Activated B cell treated with CpG ODN at 0.5 μM for 24 hours (primary cell): ENCODE measurements at regions of chr9 and their contacts with region 1.

Region 1: GRCh38 chr9:80242002-80242401 is 670.2 kb downstream of the TLE4 start:
- DNase-seq: no peak
- ATAC-seq: no peak
- H3K4me3 Mint-ChIP-seq: no peak overlapping the region
- H3K27ac Mint-ChIP-seq: no peak overlapping the region
- H3K4me1 Mint-ChIP-seq: peaks cover 32% of the 10 kb centered on the region
- H3K27me3 Mint-ChIP-seq: no peaks in the 10 kb centered on the region
- CTCF ChIP-seq: no peak

Region 2: DNA sequence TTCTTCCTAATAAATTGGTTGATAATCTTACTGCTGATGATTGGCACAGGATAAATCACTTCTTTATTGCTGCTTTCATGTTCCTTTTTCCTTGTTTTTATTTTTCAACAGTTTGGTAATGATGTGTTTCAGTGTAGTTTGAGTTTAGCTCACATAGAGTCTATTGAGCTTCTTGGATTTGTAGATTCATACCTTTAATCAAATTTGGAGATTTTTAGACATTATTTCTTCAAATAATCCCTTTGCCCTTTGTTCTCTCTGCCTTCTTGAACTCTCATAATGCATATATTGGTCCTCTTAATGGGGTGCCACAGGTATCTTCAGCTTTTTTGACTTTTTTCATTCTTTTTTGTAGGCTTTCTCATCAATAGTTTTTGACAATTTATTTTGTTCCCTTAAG is 394.9 kb before region 1 on chr9:
- CTCF ChIA-PET with region 1: no interaction called
- POLR2A ChIA-PET with region 1: no interaction called
- intact Hi-C with region 1: no loop called
- DNase-seq: no peak
- ATAC-seq: no peak
- H3K4me3 Mint-ChIP-seq: no peak overlapping the region
- H3K27ac Mint-ChIP-seq: no peak overlapping the region
- H3K4me1 Mint-ChIP-seq: no peaks in the 10 kb centered on the region
- H3K27me3 Mint-ChIP-seq: no peaks in the 10 kb centered on the region
- CTCF ChIP-seq: no peak

Region 3: GRCh38 chr9:79990536-79990935 is 251.5 kb before region 1 on chr9:
- CTCF ChIA-PET with region 1: no interaction called
- POLR2A ChIA-PET with region 1: no interaction called
- intact Hi-C with region 1: no loop called
- DNase-seq: no peak
- ATAC-seq: no peak
- H3K4me3 Mint-ChIP-seq: no peak overlapping the region
- H3K27ac Mint-ChIP-seq: no peak overlapping the region
- H3K4me1 Mint-ChIP-seq: no peaks in the 10 kb centered on the region
- H3K27me3 Mint-ChIP-seq: no peaks in the 10 kb centered on the region
- CTCF ChIP-seq: no peak

Region 4: DNA sequence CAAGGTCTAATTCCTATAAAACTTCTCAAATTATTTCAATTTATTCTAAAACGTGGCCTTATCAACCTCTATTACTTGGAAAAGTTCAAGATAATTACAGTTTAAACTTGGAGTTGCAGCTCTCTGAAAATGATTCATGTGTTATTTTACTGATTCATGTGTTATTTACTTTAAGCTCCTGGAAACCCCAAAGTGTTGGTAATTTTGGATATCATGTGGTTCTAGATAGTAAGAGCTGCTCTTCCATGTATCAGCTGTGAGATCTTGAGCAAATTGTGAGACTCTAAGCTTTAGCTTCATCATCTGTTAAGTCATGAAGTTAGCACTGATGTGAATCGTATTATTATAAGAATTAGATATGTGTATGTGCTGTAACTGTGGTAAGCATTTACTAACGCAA is 78.9 kb after region 1 on chr9:
- CTCF ChIA-PET with region 1: no interaction called
- POLR2A ChIA-PET with region 1: no interaction called
- intact Hi-C with region 1: loop called (anchors 5 kb)
- DNase-seq: no peak
- ATAC-seq: no peak
- H3K4me3 Mint-ChIP-seq: no peak overlapping the region
- H3K27ac Mint-ChIP-seq: no peak overlapping the region
- H3K4me1 Mint-ChIP-seq: no peaks in the 10 kb centered on the region
- H3K27me3 Mint-ChIP-seq: no peaks in the 10 kb centered on the region
- CTCF ChIP-seq: no peak